ENCODE measurements at regions of chr15 and their contacts with region 1.

Region 1: DNA sequence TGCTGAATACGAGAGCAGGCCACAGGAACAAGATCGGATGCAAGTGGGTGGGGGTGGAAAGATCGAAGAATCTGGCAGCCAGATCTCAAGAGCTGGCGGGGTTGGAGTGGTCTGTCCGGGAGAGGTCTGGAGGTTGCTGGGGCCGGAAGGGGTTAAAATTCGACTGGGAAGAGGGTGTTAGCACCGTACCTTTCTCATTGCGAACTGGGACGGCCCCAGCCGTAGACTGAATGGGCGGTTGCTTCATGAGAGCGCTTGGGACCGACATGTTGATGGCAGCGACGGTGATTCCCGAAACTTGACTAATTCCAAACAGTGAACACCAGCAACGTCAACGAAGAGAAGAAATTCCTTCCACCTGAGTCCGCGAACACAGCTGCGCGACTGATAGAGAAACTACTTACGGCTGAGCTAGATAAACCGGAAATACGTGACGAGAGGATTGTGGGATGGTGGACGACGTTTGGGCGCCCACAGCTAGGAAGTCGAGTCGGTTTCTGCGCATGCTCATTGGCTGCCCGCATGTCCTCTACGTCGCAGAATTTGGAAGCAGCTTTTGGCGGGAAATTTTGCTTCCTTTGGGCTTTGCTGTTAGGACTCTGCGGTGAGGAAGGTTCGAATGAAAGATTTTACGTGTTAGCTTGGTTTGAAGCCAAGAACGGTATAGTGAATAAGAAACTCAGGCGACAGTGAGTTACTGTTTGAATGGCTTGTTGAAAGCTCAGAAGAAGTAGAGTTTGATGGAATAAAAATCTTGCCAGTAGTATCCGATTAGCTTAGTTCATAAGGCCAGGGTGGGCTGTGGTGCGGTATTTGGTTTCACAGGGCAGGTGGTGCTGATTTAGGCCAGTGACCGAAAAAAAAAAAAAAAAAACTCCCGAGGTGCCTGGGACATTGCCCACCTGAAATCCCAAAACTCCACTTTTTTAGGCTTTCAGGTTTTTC is at the start of gene MFAP1:
- DNase-seq: peak; percentile 97
- ATAC-seq: peak; percentile 84
- H3K4me3 ChIP-seq: peak within 1 kb of the TSS; percentile 68 to 100 (median 98)
- H3K4me3 Mint-ChIP-seq: peak within 1 kb of the TSS; percentile 99
- H3K27ac ChIP-seq: peak within 1 kb of the TSS; percentile 94 to 95
- H3K27ac Mint-ChIP-seq: peak within 1 kb of the TSS; percentile 98
- H3K4me1 ChIP-seq: peaks cover 25 to 43% of the 10 kb centered on the region in 2 donors
- H3K4me1 Mint-ChIP-seq: peaks cover 57% of the 10 kb centered on the region
- H3K27me3 ChIP-seq: no peaks in the 10 kb centered on the region
- H3K27me3 Mint-ChIP-seq: no peaks in the 10 kb centered on the region
- CTCF ChIP-seq: no peak
- total RNA-seq, gene MFAP1: 22.0 and 22.1 TPM in 2 replicates

Region 2: GRCh38 chr15:43505738-43506137 is 318.8 kb before region 1 on chr15:
- CTCF ChIA-PET with region 1: no interaction called
- POLR2A ChIA-PET with region 1: no interaction called
- intact Hi-C with region 1: no loop called
- DNase-seq: no peak
- ATAC-seq: no peak
- H3K4me3 ChIP-seq: no peak overlapping the region
- H3K4me3 Mint-ChIP-seq: no peak overlapping the region
- H3K27ac ChIP-seq: no peak overlapping the region
- H3K27ac Mint-ChIP-seq: no peak overlapping the region
- H3K4me1 ChIP-seq: peaks cover 3 to 7% of the 10 kb centered on the region in 2 donors
- H3K4me1 Mint-ChIP-seq: peaks cover 9% of the 10 kb centered on the region
- H3K27me3 ChIP-seq: no peaks in the 10 kb centered on the region
- H3K27me3 Mint-ChIP-seq: no peaks in the 10 kb centered on the region
- CTCF ChIP-seq: no peak

Region 3: GRCh38 chr15:43776718-43777583 is 47.6 kb before region 1 on chr15 and contains the start of gene ELL3:
- CTCF ChIA-PET with region 1: interaction called, 6 read pairs
- POLR2A ChIA-PET with region 1: interaction called, 9 read pairs
- intact Hi-C with region 1: loop called (anchors 1 kb)
- DNase-seq: peak; percentile 91
- ATAC-seq: peak; percentile 62
- H3K4me3 ChIP-seq: peak within 1 kb of the TSS; percentile 78 to 93 (median 88)
- H3K4me3 Mint-ChIP-seq: peak within 1 kb of the TSS; percentile 96
- H3K27ac ChIP-seq: peak within 1 kb of the TSS; percentile 73 to 76
- H3K27ac Mint-ChIP-seq: peak within 1 kb of the TSS; percentile 97
- H3K4me1 ChIP-seq: peaks cover 16 to 30% of the 10 kb centered on the region in 2 donors
- H3K4me1 Mint-ChIP-seq: peaks cover 41% of the 10 kb centered on the region
- H3K27me3 ChIP-seq: no peaks in the 10 kb centered on the region
- H3K27me3 Mint-ChIP-seq: no peaks in the 10 kb centered on the region
- CTCF ChIP-seq: peak; percentile 93
- total RNA-seq, gene ELL3: 88.8 and 90.0 TPM in 2 replicates

Region 4: GRCh38 chr15:43791993-43792760 is 32.4 kb before region 1 on chr15 and contains the start of gene SERF2:
- CTCF ChIA-PET with region 1: interaction called, 5 read pairs
- POLR2A ChIA-PET with region 1: interaction called, 11 read pairs
- intact Hi-C with region 1: loop called (anchors 1 kb)
- DNase-seq: peak; percentile 100
- ATAC-seq: peak; percentile 86
- H3K4me3 ChIP-seq: peak within 1 kb of the TSS; percentile 50 to 100 (median 94)
- H3K4me3 Mint-ChIP-seq: peak within 1 kb of the TSS; percentile 93
- H3K27ac ChIP-seq: peak within 1 kb of the TSS; percentile 96
- H3K27ac Mint-ChIP-seq: peak within 1 kb of the TSS; percentile 93
- H3K4me1 ChIP-seq: peaks cover 37 to 73% of the 10 kb centered on the region in 2 donors
- H3K4me1 Mint-ChIP-seq: peaks cover 66% of the 10 kb centered on the region
- H3K27me3 ChIP-seq: no peaks in the 10 kb centered on the region
- H3K27me3 Mint-ChIP-seq: no peaks in the 10 kb centered on the region
- CTCF ChIP-seq: no peak
- total RNA-seq, gene SERF2: 436 and 455 TPM in 2 replicates

Region 5: DNA sequence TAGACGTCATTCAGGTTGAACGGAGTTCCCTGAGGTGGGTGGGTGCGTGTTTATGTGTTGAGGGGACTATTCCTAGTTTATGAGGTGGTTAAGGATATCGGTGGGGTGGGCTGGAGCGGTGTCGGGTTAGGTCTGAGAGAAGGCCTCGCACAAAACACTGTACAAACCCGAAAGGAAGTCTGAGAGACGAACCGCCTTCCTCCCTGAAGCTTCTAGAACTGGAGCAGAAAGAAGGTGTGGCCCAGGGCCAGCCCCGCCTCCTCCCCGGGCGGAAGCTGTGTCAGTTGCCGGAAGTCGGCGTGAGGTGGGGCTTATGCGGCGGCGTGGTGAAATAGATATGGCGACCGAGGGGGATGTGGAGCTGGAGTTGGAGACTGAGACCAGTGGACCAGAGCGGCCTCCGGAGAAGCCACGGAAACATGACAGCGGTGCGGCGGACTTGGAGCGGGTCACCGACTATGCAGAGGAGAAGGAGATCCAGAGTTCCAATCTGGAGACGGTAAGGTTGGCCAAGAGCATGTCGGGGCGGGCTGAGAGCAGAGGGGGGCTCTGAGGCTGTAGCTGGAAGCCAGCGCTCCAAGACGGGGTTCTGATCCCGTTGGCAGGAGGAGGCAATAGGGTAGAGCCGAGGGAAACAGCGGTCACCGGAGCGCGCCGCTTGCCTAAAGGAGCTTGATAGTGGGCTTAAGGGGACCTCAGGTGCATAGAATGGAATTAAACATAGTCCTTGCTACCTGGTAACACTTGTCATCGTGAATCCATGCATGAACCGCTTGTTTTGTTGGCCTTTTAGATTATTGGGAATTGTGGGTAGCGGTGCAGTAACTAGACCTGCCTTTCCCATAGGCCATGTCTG is 24.1 kb before region 1 on chr15 and contains the start of gene HYPK:
- CTCF ChIA-PET with region 1: interaction called, 6 read pairs
- POLR2A ChIA-PET with region 1: interaction called, 6 read pairs
- intact Hi-C with region 1: loop called (anchors 1 kb)
- DNase-seq: peak; percentile 92
- ATAC-seq: peak; percentile 98
- H3K4me3 ChIP-seq: peak within 1 kb of the TSS; percentile 85 to 99 (median 90)
- H3K4me3 Mint-ChIP-seq: peak within 1 kb of the TSS; percentile 98
- H3K27ac ChIP-seq: peak within 1 kb of the TSS; percentile 79 to 81
- H3K27ac Mint-ChIP-seq: peak within 1 kb of the TSS; percentile 96
- H3K4me1 ChIP-seq: peaks cover 14 to 27% of the 10 kb centered on the region in 2 donors
- H3K4me1 Mint-ChIP-seq: peaks cover 44% of the 10 kb centered on the region
- H3K27me3 ChIP-seq: no peaks in the 10 kb centered on the region
- H3K27me3 Mint-ChIP-seq: no peaks in the 10 kb centered on the region
- CTCF ChIP-seq: no peak
- total RNA-seq, gene HYPK: 24.0 and 25.7 TPM in 2 replicates

Region 6: DNA sequence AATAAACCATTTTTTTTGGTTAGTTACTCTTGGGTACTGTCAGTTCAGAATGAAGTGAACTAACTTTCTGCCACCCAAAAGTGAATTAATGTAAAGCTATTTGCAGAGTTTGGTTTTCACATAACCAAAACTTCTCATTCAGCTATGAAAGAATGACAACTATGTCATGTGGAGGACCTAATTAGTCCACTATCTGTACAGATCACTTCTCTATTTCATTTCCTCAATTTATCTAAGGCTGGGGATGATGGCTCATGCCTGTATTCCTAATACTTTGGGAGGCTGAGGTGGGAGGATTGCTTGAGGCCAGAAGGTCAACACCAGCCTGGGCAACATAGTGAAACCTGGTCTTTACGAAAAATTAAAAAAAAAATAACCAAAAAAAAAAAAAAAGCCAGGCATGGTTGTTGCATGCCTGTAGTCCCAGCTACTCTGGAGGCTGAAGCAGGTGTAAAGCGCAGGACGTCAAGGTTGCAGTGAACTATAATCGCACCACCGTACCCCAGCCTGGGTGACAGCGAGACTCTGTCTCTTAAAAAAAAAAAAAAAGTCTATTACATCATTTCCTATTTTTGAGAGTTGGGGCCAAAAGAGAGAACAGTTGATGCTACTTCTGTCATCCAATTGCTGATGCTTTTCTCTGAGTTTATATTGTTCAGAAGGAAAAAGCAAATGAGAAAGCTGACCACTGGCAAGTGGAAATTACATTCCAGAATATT is 15.5 kb before region 1 on chr15:
- CTCF ChIA-PET with region 1: interaction called, 6 read pairs
- POLR2A ChIA-PET with region 1: interaction called, 9 read pairs
- intact Hi-C with region 1: loop called (anchors 1 kb)
- DNase-seq: peak; percentile 87
- ATAC-seq: peak; percentile 94
- H3K4me3 ChIP-seq: peak overlapping the region in 1 of 5 experiments; percentile 28
- H3K4me3 Mint-ChIP-seq: peak overlapping the region; percentile 79
- H3K27ac ChIP-seq: peak overlapping the region; percentile 84 to 93
- H3K27ac Mint-ChIP-seq: peak overlapping the region; percentile 95
- H3K4me1 ChIP-seq: peaks cover 28 to 31% of the 10 kb centered on the region in 2 donors
- H3K4me1 Mint-ChIP-seq: peaks cover 25% of the 10 kb centered on the region
- H3K27me3 ChIP-seq: no peaks in the 10 kb centered on the region
- H3K27me3 Mint-ChIP-seq: no peaks in the 10 kb centered on the region
- CTCF ChIP-seq: no peak

Region 7: DNA sequence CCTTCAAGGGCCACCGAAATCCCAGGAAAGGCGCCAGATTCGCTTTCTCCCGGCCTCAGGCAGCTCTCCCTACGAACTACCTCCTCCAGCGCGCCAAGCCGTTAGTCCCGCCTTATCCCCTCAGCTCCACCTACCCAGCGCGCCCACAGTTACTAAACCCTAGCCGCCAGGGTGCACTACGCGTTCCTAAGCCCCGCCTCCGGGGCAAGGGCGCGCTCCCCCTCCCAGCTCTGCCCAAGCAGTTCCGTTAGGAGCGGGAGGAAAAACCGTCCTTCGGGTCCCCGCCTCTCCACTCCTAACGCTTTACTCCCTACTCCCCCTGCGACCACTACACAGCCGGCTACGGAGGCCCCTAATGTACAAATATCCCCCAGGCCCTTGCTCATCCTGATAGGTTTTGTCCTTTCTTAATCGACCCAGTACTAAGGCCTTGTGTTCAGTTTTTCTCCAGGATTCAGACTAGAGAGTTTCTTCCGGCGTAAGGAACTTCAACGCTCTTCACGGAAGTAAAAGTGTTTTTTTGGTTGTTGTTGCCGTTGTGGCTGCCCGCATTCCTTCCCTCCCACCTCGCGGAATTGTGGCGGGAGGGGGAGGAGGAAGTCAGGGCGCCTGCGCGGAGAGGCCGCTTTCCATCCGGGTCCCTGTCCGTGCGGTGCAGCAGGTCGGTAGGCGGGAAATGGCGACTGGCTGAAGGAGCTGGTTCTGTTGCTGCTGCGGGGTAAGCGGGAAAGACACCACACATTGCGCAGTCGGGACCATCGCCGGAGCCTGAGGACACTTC is 602.6 kb after region 1 on chr15 and contains the start of gene CTDSPL2:
- CTCF ChIA-PET with region 1: no interaction called
- POLR2A ChIA-PET with region 1: no interaction called
- intact Hi-C with region 1: loop called (anchors 5 kb)
- DNase-seq: peak; percentile 94
- ATAC-seq: peak; percentile 97
- H3K4me3 ChIP-seq: peak within 1 kb of the TSS; percentile 93 to 100 (median 98)
- H3K4me3 Mint-ChIP-seq: peak within 1 kb of the TSS; percentile 96
- H3K27ac ChIP-seq: peak within 1 kb of the TSS; percentile 95 to 98
- H3K27ac Mint-ChIP-seq: peak within 1 kb of the TSS; percentile 98
- H3K4me1 ChIP-seq: peaks cover 18 to 23% of the 10 kb centered on the region in 2 donors
- H3K4me1 Mint-ChIP-seq: peaks cover 46% of the 10 kb centered on the region
- H3K27me3 ChIP-seq: no peaks in the 10 kb centered on the region
- H3K27me3 Mint-ChIP-seq: no peaks in the 10 kb centered on the region
- CTCF ChIP-seq: peak; percentile 34
- total RNA-seq, gene CTDSPL2: 79.5 and 84.1 TPM in 2 replicates

Region 8: DNA sequence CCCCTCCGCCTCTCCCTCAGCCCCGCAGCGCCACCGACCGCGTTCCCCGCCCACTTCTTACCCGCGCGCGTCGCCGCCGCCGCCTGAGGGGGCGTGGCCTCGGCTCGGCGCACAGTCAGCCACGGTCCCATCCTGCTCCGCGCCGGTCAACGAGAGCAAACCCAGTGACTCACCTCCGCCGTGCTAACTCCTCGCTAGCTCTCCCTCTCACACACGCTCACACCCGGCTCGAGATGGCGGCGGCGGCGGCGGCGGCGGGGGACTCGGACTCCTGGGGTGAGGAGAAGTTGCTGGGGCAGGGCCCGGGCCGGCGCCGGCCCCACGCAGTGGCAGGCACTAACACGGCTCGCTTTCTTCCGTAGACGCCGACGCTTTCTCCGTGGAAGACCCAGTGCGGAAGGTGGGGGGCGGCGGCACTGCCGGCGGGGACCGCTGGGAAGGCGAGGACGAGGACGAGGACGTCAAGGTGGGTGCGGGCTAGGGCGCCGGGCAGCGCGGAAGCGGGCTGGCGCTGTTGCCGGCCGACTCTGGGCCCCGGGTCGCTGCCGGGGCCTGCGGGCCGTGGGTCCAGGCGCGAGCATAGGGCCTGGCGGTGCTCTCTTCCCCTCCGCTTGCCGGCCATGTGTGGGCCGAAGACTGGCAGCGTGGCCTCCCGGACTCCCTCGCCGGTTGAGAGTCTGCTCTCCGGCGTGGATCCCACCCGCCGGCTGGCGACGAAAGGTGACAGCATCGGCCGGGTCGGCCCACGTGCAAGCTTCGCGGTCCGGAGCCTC is 712.6 kb after region 1 on chr15 and contains the start of gene EIF3J:
- CTCF ChIA-PET with region 1: no interaction called
- POLR2A ChIA-PET with region 1: no interaction called
- intact Hi-C with region 1: loop called (anchors 5 kb)
- DNase-seq: peak; percentile 97
- ATAC-seq: peak; percentile 89
- H3K4me3 ChIP-seq: peak within 1 kb of the TSS; percentile 82 to 99 (median 92)
- H3K4me3 Mint-ChIP-seq: peak within 1 kb of the TSS; percentile 93
- H3K27ac ChIP-seq: peak within 1 kb of the TSS; percentile 83 to 94
- H3K27ac Mint-ChIP-seq: peak within 1 kb of the TSS; percentile 98
- H3K4me1 ChIP-seq: peaks cover 15 to 21% of the 10 kb centered on the region in 2 donors
- H3K4me1 Mint-ChIP-seq: peaks cover 40% of the 10 kb centered on the region
- H3K27me3 ChIP-seq: no peaks in the 10 kb centered on the region
- H3K27me3 Mint-ChIP-seq: no peaks in the 10 kb centered on the region
- CTCF ChIP-seq: no peak
- total RNA-seq, gene EIF3J: 61.0 and 66.7 TPM in 2 replicates